ENCODE measurements at regions of chr1 and their contacts with region 1.

Region 1: DNA sequence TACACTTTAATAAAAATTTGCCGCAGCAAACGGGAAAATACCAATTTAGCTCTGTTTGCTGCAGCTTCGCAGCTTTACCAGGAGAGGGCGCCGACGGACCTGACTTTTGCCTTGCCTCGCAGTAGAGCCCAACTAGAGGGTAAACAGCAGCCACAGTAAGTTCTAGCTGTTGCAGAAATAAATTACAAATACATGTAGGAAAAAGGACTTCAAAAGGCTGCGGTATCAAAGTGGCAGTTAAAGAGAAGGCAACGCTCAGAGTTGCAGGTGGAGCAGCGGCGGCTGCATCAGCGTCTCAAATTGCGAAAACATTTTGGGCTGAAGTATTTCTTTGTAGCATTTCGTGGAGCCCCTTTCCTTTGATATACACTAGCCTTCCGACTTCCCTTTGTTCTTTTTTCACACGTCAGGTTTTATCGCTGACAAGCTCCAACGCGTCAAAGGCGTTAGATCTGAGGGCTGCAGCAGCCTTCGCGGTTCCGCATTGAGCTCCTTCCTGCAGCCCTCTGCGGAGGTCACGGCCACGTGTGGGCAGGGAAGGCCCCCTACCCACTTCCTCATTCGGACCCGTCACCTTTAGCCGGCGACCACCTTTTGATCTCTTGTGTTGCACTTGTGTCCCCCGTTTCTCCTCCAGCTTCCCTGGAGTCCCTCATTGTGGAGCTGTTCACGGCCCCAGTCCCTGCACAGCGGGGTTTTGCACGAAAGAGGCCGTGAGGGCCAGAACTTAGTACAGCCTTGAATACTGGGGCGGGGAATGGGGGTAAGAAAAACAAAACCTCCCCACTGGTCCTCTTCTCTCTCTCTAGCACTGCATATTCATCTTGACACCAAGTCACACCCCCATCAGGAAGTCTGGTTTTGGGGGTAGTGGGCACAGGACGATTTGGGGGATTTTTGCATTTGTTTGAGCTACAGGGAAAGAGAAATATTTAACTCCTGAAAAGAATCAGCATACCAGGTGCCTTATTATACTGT is 72.8 kb downstream of the S1PR1 start:
- DNase-seq: peak; percentile 40 to 80 (median 51)
- ATAC-seq: peak; percentile 60 to 85 (median 72)
- H3K4me3 ChIP-seq: peak overlapping the region in 11 of 12 donors; percentile 10 to 55 (median 45)
- H3K27ac ChIP-seq: peak overlapping the region in 1 of 12 donors; percentile 64
- H3K4me1 ChIP-seq: peaks cover 0 to 28% (median 0%) of the 10 kb centered on the region in 12 donors
- H3K27me3 ChIP-seq: peaks cover 0 to 6% (median 0%) of the 10 kb centered on the region in 9 donors
- CTCF ChIP-seq: peak; percentile 74 to 90 (median 83)
- POLR2A ChIP-seq: no peak

Region 2: DNA sequence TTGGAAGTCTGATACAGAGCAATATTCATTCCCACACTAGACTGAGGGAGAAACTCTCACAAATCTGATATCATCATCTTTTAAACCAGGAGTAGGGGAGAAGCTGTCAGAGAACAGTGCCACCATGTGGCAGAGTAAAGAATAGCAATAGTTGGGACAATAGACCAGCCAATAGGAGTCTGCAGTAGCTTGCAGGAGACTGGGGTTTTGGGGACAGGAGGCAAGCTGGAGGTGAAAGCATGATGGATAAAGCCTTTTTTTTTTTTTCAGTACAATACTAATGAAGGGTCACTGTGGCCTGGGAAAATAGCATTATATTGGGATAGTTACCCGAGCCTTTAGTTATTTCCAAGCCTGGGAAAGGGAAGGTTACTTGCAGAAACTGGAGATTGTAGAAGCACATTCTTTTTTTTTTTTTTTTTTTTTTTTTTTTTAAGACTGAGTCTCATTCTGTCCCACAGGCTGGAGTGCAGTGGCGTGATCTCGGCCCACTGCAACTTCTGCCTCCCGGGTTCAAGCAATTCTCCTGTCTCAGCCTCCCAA is 47.9 kb after region 1 on chr1:
- intact Hi-C with region 1: loop called in 9 of 10 experiments (anchors 1 to 5 kb)
- DNase-seq: peak in 3 of 5 donors; percentile 26 to 46 (median 44)
- ATAC-seq: peak; percentile 37 to 88 (median 87)
- H3K4me3 ChIP-seq: no peak overlapping the region
- H3K27ac ChIP-seq: no peak overlapping the region
- H3K4me1 ChIP-seq: no peaks in the 10 kb centered on the region
- H3K27me3 ChIP-seq: peaks cover 0 to 10% (median 0%) of the 10 kb centered on the region in 9 donors
- CTCF ChIP-seq: peak; percentile 70 to 90 (median 82)
- POLR2A ChIP-seq: no peak

Region 3: DNA sequence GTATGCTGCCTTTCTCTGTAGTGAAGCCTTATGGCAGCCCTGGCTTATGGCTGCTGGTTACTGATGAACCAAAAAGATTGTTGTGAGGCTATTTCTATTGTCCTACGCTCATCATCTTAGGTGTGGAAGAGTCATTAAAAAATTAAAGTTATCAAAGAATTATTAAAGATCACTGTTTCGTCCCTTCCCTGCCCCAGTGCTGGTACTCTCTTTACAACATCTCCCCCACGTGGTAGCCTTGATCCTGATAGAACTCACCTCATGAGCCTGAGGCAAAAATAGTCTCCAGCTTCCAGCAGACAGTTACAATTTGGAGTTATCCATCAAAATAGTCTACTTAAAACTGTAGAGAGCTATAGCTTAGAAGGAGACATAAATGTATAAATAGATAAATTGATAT is 128.7 kb after region 1 on chr1:
- intact Hi-C with region 1: loop called in 3 of 10 experiments (anchors 5 kb)
- DNase-seq: no peak
- ATAC-seq: peak in 3 of 4 donors; percentile 34 to 54 (median 47)
- H3K4me3 ChIP-seq: no peak overlapping the region
- H3K27ac ChIP-seq: no peak overlapping the region
- H3K4me1 ChIP-seq: no peaks in the 10 kb centered on the region
- H3K27me3 ChIP-seq: peaks cover 0 to 10% (median 0%) of the 10 kb centered on the region in 9 donors
- CTCF ChIP-seq: peak in 5 of 12 donors; percentile 6 to 36 (median 22)
- POLR2A ChIP-seq: no peak

Region 4: DNA sequence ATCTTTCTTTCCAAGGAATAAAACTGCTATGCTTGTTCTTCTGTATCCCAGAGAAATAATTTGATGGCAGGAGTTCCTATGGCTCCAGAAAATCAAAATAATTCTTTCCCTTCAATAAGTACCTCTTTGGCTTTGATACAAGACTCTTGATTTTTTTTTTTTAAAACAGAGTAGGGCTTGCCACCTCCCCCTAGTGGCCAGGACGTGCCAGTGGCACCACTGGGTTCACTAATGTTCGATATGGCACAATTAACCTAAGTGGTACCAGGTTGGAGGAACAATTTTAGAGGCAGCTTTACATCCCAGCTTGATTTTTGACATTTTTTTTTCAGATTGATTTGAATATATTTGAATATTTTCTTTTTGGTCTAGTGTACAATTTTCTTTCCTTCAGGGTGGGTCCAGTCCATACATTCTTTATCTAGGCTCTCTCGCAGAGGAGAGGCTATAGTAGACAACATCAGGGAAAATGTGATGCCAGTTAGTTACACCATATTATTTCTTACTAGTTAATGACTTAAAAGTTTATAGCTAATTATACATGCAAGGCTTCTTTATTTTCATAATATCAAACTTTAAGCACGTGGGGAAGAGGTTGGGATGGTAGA is 258.1 kb after region 1 on chr1:
- intact Hi-C with region 1: loop called in 2 of 10 experiments (anchors 5 to 10 kb)
- DNase-seq: peak in 1 of 5 donors; percentile 16
- ATAC-seq: no peak
- H3K4me3 ChIP-seq: no peak overlapping the region
- H3K27ac ChIP-seq: no peak overlapping the region
- H3K4me1 ChIP-seq: no peaks in the 10 kb centered on the region
- H3K27me3 ChIP-seq: no peaks in the 10 kb centered on the region
- CTCF ChIP-seq: peak; percentile 70 to 87 (median 84)
- POLR2A ChIP-seq: no peak

Measured in heart left ventricle (tissue), 16 donors.